ENCODE measurements at regions of chr1 and their contacts with region 1.

Region 1: DNA sequence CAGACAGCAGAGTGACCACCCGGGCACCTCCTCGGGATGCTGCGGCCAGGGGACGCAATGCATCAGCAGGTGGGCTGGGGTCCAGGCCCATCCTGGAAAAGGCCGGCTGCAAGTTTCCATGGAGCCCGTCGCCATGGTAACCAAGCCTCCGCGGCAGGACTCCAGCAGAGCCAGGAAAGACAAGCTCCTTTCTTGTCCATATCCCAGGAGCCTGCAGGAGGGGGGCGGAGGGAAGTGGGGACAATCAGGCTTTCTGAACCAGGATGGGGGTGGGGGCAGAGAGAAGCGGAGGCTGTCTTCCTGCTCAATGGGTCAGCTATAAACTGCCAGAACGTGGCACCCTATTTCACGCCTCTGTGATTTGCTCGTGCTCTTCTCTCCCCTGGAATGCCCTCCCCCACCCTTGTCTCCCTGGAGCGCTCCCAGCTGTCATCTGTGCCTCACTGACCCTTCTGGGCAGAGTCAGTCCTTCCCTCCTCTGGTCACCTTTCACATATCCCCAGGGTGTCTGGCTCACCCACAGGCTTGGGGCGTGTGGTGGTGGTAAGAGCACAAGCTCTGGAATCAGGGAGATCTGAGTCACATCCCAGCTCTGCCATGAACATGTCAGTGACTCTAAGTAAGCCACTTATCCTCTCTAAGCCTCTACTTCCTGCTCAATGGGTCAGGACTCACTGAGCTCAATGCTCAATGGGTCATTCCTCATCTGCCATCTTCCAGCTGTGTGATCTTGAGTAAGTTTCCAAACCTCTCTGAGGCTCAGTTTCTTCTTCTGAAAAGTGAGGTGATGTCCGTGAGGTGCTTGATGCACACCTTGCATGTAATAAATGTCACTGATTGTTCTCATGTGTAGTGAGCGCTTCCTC is 58.9 kb upstream of the LAPTM5 start:
- DNase-seq: no peak
- H3K4me3 ChIP-seq: no peak overlapping the region
- H3K27ac ChIP-seq: no peak overlapping the region
- H3K4me1 ChIP-seq: no peaks in the 10 kb centered on the region
- CTCF ChIP-seq: no peak

Region 2: DNA sequence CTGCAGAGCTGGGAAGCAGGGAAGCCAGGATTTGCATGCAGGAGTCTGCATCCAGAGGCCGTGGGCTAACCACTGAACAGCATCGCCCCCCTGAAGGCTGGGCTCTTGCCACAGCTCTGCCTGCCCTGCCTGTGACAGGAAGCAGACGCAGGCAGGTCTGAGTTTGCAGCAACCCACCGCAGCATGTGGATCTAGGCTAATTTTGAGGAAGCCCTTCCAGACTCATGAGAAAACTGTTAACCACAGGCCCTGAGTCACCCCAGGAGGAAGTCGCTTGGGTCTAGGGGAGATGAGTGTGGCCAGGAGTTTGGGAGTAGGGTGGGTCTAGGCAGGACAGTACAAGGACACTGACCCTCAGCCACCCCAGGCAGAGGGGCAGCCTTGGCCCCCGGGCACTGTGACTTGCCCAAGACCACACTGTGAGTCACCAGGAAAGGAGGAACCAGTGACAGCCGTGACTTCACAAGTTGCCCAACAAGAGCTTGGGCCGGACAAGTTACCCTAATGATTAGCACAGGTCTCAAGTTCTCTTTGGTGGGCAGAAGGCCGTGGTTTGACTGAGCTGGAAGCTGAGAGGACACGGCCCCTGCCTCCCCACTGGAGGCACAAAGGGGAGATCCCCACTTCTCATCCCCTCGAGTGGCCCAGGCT is 59.8 kb before region 1 on chr1:
- CTCF ChIA-PET with region 1: no interaction called
- POLR2A ChIA-PET with region 1: no interaction called
- intact Hi-C with region 1: no loop called
- DNase-seq: peak; percentile 80
- H3K4me3 ChIP-seq: peak overlapping the region; percentile 69
- H3K27ac ChIP-seq: peak overlapping the region; percentile 99
- H3K4me1 ChIP-seq: peaks cover 99% of the 10 kb centered on the region
- CTCF ChIP-seq: no peak

Region 3: DNA sequence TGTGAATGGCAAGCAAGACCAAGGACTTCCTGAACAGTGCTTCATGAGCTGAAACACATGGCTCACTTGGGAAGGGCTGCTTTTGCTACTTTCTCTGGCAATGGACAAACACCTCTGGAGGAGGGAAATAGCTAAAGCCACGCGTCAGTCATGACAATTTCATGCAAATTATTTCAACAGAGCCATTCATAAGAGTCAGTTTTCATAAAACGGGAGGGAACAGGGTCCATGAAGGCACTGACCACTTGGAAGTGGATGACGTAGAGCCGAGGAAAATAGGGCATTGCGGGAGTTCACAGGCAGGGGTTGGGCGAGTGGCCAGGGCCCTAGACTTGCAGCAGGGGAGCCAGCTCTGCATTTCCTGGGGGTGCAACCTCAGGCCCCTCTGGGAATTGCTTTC is 48.2 kb after region 1 on chr1:
- CTCF ChIA-PET with region 1: no interaction called
- POLR2A ChIA-PET with region 1: no interaction called
- intact Hi-C with region 1: loop called (anchors 5 kb)
- DNase-seq: no peak
- H3K4me3 ChIP-seq: no peak overlapping the region
- H3K27ac ChIP-seq: no peak overlapping the region
- H3K4me1 ChIP-seq: no peaks in the 10 kb centered on the region
- CTCF ChIP-seq: no peak

Measured in OCI-LY7 (cell line).